ENCODE measurements at regions of chr2 and their contacts with region 1.

Region 1: DNA sequence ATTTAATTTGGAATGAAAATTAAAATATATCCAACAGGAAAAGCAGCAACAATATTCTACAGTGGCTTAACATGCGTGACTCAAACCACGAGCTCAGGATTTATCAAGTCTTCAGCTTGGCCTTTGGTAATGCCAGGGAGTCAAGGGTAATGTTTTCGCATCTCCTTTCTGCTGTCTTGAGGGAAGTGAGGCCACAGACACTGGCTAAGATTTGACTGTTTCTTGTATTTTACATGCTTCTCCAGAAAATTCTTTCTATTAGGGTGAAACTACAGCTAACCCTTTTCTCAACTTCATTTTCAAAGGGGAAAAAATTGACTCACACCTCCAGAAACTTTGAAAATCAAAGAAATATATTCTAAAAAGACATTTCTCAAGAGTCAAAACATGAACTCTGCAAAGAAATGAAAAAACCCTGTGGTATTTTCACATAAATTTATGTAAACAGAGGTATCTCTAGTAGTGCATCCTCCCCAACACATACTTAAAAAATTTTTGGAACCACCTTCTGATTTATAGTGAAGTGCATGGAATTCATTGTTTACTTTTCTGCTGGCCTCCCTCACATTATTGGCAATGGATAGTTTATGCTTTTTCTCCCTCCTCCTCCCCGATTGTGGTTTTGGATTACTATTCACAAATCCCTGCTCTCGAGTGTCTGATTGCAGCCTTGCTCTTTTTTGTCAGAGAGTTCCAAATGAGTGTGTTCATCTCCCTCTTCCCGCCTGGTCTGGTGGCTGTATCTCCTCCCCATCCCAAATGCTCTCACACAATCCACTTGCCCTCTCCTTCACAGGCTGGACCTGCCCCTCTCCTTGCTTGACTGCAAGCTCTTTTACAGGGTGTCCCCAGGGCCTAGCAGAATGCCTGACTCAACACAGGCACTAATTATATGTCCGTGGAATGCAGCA is 48.6 kb downstream of the DPP4 start:
- DNase-seq: no peak
- H3K4me3 Mint-ChIP-seq: peak overlapping the region; percentile 52
- H3K27ac Mint-ChIP-seq: peak overlapping the region; percentile 70
- H3K4me1 Mint-ChIP-seq: peaks cover 74% of the 10 kb centered on the region
- H3K27me3 Mint-ChIP-seq: no peaks in the 10 kb centered on the region

Region 2: DNA sequence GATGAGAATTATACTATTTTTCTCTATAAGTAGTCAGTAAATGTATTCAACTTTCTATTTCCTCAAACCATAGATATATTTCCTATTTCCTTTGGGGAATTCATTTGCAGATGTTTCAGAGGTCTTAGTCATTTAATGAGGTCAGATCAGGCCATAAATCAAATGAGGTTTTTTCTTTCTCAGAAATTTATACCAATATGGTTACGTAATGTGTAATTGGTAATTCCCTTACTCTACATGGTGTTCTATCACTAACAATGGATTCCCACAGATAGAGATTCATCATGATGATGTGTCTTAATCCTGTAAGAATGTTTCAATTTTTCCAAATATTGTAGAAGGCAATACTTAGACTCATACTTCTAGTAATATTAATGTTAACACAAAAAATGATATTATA is 59.4 kb before region 1 on chr2:
- intact Hi-C with region 1: loop called (anchors 1 kb)
- DNase-seq: no peak
- H3K4me3 Mint-ChIP-seq: no peak overlapping the region
- H3K27ac Mint-ChIP-seq: peak overlapping the region; percentile 1
- H3K4me1 Mint-ChIP-seq: peaks cover 86% of the 10 kb centered on the region
- H3K27me3 Mint-ChIP-seq: no peaks in the 10 kb centered on the region

Region 3: DNA sequence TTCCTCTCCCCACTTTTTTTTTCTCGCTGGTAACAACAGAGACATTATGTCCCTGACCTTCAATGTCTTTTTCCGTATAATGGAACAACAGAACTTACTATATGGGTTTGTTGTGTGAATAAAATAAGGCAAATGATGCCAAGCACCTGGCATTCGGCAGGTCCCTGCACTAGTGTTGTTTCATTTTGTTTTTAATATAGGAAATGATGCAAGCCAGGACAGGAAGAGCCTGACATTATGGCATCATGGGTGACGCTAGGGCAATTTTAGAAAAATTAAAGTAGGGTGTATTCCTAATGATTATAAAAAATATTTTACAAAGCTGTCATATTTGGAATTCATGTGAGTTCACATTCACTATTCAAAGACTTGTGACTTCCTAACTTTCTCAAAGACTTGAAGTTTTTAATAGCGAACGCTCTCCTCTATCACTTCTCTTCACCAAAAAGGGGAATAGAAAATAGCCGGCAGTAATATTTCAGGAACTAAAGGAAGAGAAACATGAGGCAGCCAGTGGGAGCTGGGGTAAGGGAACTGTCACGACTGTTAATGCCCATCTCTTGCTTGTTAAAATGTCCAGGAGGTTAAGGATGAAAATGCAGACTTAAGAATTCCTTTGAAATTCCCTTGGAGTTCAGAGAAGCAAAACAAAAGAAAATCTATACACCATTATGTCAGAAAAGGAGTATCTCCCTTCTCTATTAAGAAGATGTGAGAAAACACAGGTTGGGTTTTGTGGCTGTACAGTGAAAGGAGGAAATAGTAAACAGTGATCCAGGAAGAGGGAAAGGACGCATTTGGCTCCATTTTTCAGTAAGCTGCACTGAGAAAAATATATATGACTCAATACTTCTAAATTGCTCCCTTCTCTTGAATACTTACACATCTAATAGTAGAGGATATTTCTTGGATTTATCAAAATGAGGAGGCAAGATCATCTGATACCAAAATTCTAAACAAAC is 11.6 kb before region 1 on chr2:
- intact Hi-C with region 1: loop called (anchors 1 kb)
- DNase-seq: no peak
- H3K4me3 Mint-ChIP-seq: peak overlapping the region; percentile 81
- H3K27ac Mint-ChIP-seq: peak overlapping the region; percentile 95
- H3K4me1 Mint-ChIP-seq: peaks cover 95% of the 10 kb centered on the region
- H3K27me3 Mint-ChIP-seq: no peaks in the 10 kb centered on the region

Region 4: DNA sequence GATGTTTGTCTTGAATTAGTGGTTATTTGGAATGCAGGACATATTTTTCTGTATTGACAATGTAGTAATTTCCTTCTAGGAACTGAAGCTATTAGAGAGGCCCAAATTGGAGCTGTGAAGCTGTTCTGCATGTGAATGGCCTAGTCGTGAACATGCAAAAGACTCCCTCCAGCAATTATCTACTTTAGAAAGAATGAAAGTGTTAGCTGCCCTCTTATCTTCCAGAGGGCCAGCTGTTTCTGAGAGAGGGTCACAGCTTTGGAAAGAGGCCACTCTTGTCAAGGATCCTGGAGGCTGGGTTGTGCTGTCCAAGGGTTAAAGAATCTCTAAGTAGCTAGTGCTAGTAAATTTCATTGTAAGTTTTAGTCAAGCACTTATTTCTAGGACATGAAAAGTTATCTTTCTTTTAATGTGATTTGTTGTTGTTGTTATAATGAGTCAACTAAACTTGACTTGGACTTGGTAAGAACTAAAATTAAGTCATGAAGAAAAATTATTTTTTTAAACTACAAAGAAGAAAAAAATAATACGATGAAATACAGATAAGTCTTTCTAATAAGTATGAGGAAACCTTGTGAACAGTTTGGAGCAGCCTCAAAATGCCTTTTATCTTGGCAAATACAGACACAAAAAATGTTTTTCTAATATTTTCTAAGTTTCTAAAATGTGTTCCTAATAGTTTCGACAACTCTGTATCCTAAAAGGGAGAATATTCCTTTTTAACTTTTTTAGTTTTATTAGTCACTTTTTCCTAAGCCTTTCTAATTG is 11.8 kb after region 1 on chr2:
- intact Hi-C with region 1: loop called (anchors 1 kb)
- DNase-seq: no peak
- H3K4me3 Mint-ChIP-seq: no peak overlapping the region
- H3K27ac Mint-ChIP-seq: no peak overlapping the region
- H3K4me1 Mint-ChIP-seq: peaks cover 66% of the 10 kb centered on the region
- H3K27me3 Mint-ChIP-seq: no peaks in the 10 kb centered on the region